H1 (cell line): ENCODE measurements at regions of chr17 and their contacts with region 1.

Region 1: DNA sequence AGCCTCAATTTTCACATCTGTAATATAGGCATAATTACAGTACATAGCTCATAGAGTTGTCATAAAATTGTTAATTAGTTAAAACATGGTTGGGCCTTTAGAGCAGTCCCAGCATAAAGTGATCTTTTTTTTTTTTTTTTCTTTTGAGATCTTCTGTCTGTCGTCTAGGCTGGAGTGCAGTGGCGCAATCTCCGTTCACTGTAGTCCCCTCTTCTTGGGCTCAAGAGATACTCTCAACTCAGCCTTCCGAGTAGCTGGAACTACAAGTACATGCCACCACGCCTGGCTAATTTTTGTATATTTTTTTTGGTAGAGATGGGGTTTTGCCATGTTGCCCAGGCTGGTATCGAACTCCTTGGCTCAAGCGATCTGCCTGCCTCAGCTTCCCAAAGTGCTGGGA is 31.0 kb downstream of the RND2 start:
- DNase-seq: no peak
- H3K4me3 ChIP-seq: no peak overlapping the region
- H3K27ac ChIP-seq: no peak overlapping the region
- H3K4me1 ChIP-seq: no peaks in the 10 kb centered on the region
- H3K27me3 ChIP-seq: no peaks in the 10 kb centered on the region
- CTCF ChIP-seq: no peak
- EP300 ChIP-seq: no peak
- POLR2A ChIP-seq: no peak
- RAD21 ChIP-seq: no peak

Region 2: GRCh38 chr17:42964161-42964932 is 91.7 kb before region 1 on chr17 and contains the start of gene AARSD1:
- CTCF ChIA-PET with region 1: no interaction called
- POLR2A ChIA-PET with region 1: no interaction called
- DNase-seq: peak; percentile 80 to 88
- H3K4me3 ChIP-seq: peak within 1 kb of the TSS; percentile 69 to 84 (median 74)
- H3K27ac ChIP-seq: peak within 1 kb of the TSS; percentile 46; the same call in 1 of the 2 replicates
- H3K4me1 ChIP-seq: peaks cover 0 to 2% (median 0%) of the 10 kb centered on the region in 4 experiments; a peak in 1 of 7 replicates
- H3K27me3 ChIP-seq: no peaks in the 10 kb centered on the region
- CTCF ChIP-seq: no peak
- EP300 ChIP-seq: no peak
- POLR2A ChIP-seq: peak in 1 of 2 experiments; percentile 88; a peak in 2 of 3 replicates
- RAD21 ChIP-seq: no peak
- total RNA-seq, gene AARSD1: 45.0 and 51.5 TPM in 2 replicates

Region 3: GRCh38 chr17:43042025-43042628 is 13.9 kb before region 1 on chr17:
- CTCF ChIA-PET with region 1: interaction called, 21 read pairs
- POLR2A ChIA-PET with region 1: interaction called, 4 read pairs
- DNase-seq: no peak
- H3K4me3 ChIP-seq: peak overlapping the region in 1 of 4 experiments; percentile 1; a peak in 1 of 8 replicates
- H3K27ac ChIP-seq: peak overlapping the region; percentile 49
- H3K4me1 ChIP-seq: peaks cover 1 to 32% (median 22%) of the 10 kb centered on the region in 4 experiments
- H3K27me3 ChIP-seq: no peaks in the 10 kb centered on the region
- CTCF ChIP-seq: no peak
- EP300 ChIP-seq: no peak
- POLR2A ChIP-seq: no peak
- RAD21 ChIP-seq: peak; percentile 26 to 44; a peak in 3 of 4 replicates